Tibial artery (tissue), 4 donors: ENCODE measurements at regions of chr13 and their contacts with region 1.

Region 1: DNA sequence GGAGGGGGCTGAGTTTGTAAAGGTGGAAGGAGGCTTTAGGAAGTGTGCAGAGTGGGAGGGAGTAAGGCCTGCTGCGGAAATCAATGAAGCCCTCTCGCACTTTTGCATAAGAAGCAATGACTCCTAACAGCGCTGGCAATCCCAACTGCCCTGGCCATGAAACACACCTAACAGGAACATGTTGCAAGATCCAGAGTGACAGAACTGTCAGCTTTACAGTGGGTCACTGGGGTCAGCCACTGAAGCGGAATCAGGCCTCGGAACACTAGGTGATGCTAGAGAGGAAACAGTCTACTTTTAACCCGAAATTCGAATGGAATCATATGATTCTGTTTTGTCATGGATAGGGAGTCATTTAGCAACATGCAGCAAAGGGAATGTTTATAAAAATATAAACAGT is 54.4 kb downstream of the FGF14 start:
- DNase-seq: no peak
- H3K4me3 ChIP-seq: no peak overlapping the region
- H3K27ac ChIP-seq: no peak overlapping the region
- H3K4me1 ChIP-seq: no peaks in the 10 kb centered on the region
- H3K27me3 ChIP-seq: no peaks in the 10 kb centered on the region
- CTCF ChIP-seq: no peak

Region 2: DNA sequence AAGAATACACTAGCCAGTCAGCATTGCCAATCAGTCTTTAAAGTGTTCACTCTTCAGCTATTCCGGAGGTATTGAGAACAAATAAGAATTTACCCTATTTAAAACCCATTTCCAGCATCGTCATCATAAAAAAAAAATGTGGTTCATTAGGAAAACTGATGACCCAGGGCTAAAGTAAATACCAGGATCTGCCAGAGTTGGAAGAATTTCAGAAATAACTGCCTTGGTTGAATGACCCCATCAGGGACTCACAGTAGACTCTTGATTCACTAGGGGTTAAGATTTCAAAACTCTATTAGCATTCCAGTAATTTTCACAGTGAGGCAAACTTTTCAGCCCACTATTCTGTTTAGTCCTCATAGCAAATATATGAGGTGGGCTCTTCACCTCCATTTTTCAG is 518.0 kb before region 1 on chr13:
- intact Hi-C with region 1: loop called (anchors 2 kb)
- DNase-seq: no peak
- H3K4me3 ChIP-seq: no peak overlapping the region
- H3K27ac ChIP-seq: no peak overlapping the region
- H3K4me1 ChIP-seq: no peaks in the 10 kb centered on the region
- H3K27me3 ChIP-seq: no peaks in the 10 kb centered on the region
- CTCF ChIP-seq: no peak

Region 3: DNA sequence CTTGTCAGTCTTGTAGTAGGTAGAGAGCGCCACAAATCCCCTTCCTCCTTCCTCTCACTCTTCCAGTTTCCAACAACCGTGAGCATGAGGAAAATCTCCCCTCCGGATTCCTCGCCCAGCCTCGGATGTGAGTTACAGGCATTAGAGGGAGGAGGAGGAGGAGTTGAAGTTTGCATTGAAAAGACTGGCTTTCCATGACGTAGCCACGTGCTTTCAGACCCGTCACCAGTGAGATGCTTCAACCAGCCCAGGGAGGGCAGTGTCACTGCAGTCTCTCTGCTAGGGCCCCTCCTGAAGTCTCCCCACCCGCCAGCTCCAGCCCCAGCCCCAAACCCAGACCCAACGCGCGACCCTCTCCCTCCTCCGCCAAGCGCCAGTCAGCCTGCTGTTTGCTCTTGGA is 54.8 kb after region 1 on chr13:
- intact Hi-C with region 1: no loop called
- DNase-seq: peak in 1 of 2 donors; percentile 23
- H3K4me3 ChIP-seq: peak overlapping the region; percentile 47 to 58
- H3K27ac ChIP-seq: peak overlapping the region in 1 of 2 donors; percentile 6
- H3K4me1 ChIP-seq: peaks cover 0 to 32% (median 24%) of the 10 kb centered on the region in 4 donors
- H3K27me3 ChIP-seq: peaks cover 0 to 39% of the 10 kb centered on the region in 2 donors
- CTCF ChIP-seq: no peak